GM10248 (cell line): ENCODE measurements at regions of chr11 and their contacts with region 1.

Region 1: GRCh38 chr11:76318744-76319384 is 62.1 kb downstream of the THAP12 start:
- DNase-seq: peak; percentile 88
- CTCF ChIP-seq: peak; percentile 95

Region 2: GRCh38 chr11:76200006-76200940 is 118.6 kb before region 1 on chr11:
- CTCF ChIA-PET with region 1: interaction called, 296 read pairs
- POLR2A ChIA-PET with region 1: no interaction called
- DNase-seq: no peak
- CTCF ChIP-seq: no peak

Region 3: DNA sequence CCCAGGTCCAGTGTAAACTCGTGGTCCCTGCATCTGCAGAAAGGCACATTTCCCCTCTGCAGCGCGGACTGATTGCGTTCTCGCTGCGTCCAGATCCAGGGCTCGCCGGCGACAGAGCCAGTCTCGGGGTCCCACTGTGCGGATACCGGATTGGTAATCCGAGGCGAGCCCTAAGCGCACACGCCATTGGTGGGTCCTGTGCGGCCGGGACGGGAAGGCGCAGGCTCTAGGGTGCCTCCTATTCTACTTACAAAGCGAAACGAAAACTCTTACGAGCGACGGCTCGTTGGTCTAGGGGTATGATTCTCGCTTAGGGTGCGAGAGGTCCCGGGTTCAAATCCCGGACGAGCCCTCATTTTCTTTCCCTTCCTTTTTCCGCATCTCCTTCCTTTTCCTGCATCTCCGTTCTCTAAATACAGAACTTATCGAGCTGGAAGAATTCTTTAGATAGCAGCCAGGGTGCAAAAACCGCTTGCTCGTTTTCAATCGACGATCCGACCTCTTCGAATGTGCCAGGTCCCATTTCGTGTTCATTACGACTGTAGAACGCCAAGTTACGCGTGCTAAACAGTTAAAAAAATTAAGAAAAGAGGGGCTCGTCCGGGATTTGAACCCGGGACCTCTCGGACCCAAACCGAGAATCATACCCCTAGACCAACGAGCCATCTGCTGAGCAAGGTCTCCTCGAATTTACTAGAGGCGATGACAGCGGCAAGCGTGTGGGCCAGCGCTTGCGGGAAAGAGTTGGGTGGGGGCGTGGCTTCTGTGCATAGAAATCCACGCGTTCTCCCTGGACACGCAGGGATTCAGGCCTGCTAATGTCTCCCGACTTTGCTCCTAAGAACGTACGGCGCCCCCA is 83.4 kb before region 1 on chr11:
- CTCF ChIA-PET with region 1: interaction called, 15 read pairs
- POLR2A ChIA-PET with region 1: no interaction called
- DNase-seq: peak; percentile 95
- CTCF ChIP-seq: no peak

Region 4: DNA sequence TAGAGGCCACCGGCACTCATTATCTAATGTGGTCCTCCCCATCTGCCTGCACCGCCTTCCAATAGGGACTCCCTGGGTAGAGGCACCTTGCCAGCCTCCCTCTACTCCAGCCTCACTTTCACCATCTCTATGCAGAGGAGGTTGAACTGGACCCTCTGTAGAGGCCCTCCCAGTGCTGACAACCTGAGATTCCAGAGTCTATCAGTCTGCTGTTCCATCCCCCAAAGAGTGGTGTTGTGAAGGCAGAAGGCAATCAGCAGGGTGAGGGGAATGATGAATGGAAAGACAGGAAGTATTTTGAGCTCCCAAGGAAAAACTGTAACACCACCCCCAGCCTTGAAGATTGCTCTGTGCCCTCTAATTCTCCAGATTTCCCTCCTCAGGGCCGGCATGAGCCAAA is 15.9 kb before region 1 on chr11:
- CTCF ChIA-PET with region 1: interaction called, 20 read pairs
- POLR2A ChIA-PET with region 1: no interaction called
- DNase-seq: no peak
- CTCF ChIP-seq: no peak

Region 5: GRCh38 chr11:76329084-76329984 is 10.5 kb after region 1 on chr11:
- CTCF ChIA-PET with region 1: interaction called, 18 read pairs
- POLR2A ChIA-PET with region 1: no interaction called
- DNase-seq: no peak
- CTCF ChIP-seq: no peak

Region 6: GRCh38 chr11:76626921-76627401 is 308.1 kb after region 1 on chr11:
- CTCF ChIA-PET with region 1: no interaction called
- POLR2A ChIA-PET with region 1: no interaction called
- DNase-seq: peak; percentile 67
- CTCF ChIP-seq: no peak